ENCODE measurements at regions of chr1 and their contacts with region 1.

Region 1: GRCh38 chr1:44318097-44319088 is 36.7 kb downstream of the ERI3 start:
- DNase-seq: no peak
- H3K4me3 ChIP-seq: no peak overlapping the region
- H3K27ac ChIP-seq: no peak overlapping the region
- H3K4me1 ChIP-seq: peaks cover 0 to 10% (median 2%) of the 10 kb centered on the region in 6 donors
- H3K27me3 ChIP-seq: no peaks in the 10 kb centered on the region
- CTCF ChIP-seq: peak; percentile 59 to 94 (median 86)
- POLR2A ChIP-seq: no peak

Region 2: GRCh38 chr1:44217809-44218410 is 100.5 kb before region 1 on chr1:
- intact Hi-C with region 1: loop called (anchors 5 kb)
- DNase-seq: peak; percentile 90
- H3K4me3 ChIP-seq: no peak overlapping the region
- H3K27ac ChIP-seq: peak overlapping the region in 2 of 8 donors; percentile 20 to 23
- H3K4me1 ChIP-seq: peaks cover 8 to 44% (median 25%) of the 10 kb centered on the region in 6 donors
- H3K27me3 ChIP-seq: no peaks in the 10 kb centered on the region
- CTCF ChIP-seq: peak; percentile 76 to 96 (median 90)
- POLR2A ChIP-seq: no peak